Pancreas (tissue), 10 donors: ENCODE measurements at regions of chr12 and their contacts with region 1.

Region 1: GRCh38 chr12:12334367-12335040 is 15.5 kb downstream of the MANSC1 start:
- DNase-seq: peak in 4 of 6 donors; percentile 42 to 74 (median 54)
- ATAC-seq: peak; percentile 28 to 60 (median 49)
- H3K4me3 ChIP-seq: no peak overlapping the region
- H3K27ac ChIP-seq: peak overlapping the region in 2 of 4 donors; percentile 58 to 63
- H3K4me1 ChIP-seq: peaks cover 21 to 38% (median 26%) of the 10 kb centered on the region in 3 donors
- H3K27me3 ChIP-seq: no peaks in the 10 kb centered on the region
- CTCF ChIP-seq: peak; percentile 51 to 80 (median 68)

Region 2: GRCh38 chr12:11927286-11927935 is 407.1 kb before region 1 on chr12:
- intact Hi-C with region 1: no loop called
- DNase-seq: no peak
- ATAC-seq: no peak
- H3K4me3 ChIP-seq: no peak overlapping the region
- H3K27ac ChIP-seq: no peak overlapping the region
- H3K4me1 ChIP-seq: no peaks in the 10 kb centered on the region
- H3K27me3 ChIP-seq: no peaks in the 10 kb centered on the region
- CTCF ChIP-seq: no peak

Region 3: DNA sequence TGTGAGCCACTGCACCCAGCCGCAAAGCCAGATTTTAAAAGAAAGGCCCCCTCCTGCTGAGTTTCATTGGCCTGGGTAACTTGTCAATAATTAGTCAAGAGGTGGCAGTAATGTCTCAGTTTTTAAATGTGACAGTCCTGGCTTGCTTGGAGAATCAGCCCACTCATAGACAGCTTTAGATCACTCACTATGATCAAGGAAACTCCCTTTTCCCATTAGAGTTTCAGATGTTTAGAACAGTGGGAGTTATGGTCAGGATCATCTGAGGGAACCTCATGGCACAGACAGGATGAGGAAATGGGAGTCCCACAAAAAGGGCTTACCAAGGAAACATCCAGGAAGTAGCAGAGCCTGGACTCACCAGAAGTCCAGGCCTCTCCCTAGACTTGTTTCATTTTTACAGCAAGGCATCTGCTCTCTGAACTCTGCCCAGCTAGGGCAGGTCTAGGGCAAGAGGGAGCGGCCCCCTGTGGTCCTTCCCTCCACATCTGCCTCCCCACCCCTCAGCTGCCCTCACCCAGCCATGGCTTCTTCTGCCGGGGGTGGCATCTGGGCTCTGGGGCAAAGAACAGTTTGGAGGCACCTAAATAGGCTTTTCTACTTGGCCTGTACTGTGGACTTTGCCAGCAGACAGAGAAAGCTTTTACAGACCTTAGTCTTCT is 252.5 kb before region 1 on chr12:
- intact Hi-C with region 1: loop called in 2 of 3 experiments (anchors 5 kb)
- DNase-seq: no peak
- ATAC-seq: peak; percentile 66 to 86 (median 82)
- H3K4me3 ChIP-seq: no peak overlapping the region
- H3K27ac ChIP-seq: peak overlapping the region in 1 of 4 donors; percentile 53
- H3K4me1 ChIP-seq: peaks cover 0 to 4% (median 0%) of the 10 kb centered on the region in 3 donors
- H3K27me3 ChIP-seq: no peaks in the 10 kb centered on the region
- CTCF ChIP-seq: no peak

Region 4: DNA sequence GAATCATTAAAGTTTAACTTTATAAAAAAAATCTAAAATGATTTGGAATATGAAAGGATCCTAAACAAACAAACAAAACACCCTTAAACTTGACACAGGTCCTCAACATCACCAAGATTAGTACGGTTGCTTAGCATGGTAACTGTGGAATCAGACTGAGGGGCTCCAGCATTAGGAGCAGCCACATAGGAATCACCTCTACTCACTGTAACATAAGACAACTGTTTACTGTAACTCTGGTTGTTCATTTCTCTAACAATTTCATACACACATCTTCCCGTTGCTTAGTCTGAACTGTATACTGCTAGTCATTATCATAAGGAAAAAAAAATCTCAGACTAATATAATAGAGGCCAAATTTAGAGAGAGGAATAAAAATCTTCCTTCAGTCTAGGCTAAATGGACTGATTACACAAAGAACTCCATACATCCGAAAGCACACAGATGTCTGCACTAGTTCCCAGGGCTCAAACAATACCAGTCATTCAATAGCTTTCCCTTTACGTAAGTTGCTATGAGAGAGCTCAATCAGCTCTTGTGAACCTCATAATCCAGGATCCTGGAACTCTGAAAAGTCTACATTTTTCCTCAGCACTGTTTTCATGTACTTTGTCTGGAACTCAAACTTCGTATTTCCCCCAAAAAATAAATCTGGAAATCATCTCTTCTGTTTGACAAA is 93.7 kb before region 1 on chr12:
- intact Hi-C with region 1: no loop called
- DNase-seq: no peak
- ATAC-seq: peak in 3 of 4 donors; percentile 75 to 90 (median 84)
- H3K4me3 ChIP-seq: no peak overlapping the region
- H3K27ac ChIP-seq: peak overlapping the region in 2 of 4 donors; percentile 4 to 35
- H3K4me1 ChIP-seq: peaks cover 0 to 34% (median 24%) of the 10 kb centered on the region in 3 donors
- H3K27me3 ChIP-seq: no peaks in the 10 kb centered on the region
- CTCF ChIP-seq: no peak